ENCODE measurements at regions of chr22 and their contacts with region 1.

Region 1: DNA sequence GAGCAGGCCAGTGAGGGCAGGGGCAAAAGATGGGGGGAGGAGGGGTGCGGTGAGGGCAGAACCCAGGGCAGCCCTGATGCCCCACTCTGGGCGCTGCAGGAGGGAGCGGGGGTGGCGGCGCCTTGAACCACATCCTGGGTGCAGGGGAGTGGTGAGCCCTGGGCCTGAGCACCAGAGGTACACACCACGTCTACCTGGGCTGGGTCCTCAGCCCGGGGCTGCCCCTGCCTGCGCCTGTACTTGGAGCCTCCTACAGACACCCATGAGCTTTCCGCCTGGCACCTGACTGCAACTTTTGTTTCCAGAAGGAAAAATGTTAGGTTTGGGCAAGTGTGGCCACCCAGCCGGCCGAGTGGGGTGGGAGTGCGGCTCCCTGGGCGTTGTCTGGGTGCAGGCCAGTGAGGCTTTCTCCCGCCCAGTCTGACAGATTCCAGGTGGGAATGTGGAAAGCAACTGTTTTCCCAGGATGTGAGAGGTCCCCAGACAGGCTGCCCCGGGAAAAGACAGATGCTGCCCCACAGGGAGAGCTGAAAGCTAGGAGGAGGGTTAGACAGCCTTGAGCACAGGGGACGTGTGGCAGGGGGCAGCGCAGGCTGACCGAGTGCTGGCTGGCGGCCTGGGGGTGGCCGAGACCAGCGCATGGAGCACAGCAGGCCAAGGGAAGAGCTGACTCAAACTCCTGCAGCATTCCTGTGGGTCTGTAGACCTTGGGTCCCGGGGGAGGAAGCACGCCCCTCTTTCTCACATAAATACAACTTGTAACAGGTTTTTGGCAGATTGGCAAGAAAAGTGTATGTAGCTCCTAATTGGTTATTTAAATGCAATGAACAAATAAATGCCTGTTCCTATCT is 44.1 kb downstream of the GNB1L start:
- DNase-seq: no peak

Region 2: DNA sequence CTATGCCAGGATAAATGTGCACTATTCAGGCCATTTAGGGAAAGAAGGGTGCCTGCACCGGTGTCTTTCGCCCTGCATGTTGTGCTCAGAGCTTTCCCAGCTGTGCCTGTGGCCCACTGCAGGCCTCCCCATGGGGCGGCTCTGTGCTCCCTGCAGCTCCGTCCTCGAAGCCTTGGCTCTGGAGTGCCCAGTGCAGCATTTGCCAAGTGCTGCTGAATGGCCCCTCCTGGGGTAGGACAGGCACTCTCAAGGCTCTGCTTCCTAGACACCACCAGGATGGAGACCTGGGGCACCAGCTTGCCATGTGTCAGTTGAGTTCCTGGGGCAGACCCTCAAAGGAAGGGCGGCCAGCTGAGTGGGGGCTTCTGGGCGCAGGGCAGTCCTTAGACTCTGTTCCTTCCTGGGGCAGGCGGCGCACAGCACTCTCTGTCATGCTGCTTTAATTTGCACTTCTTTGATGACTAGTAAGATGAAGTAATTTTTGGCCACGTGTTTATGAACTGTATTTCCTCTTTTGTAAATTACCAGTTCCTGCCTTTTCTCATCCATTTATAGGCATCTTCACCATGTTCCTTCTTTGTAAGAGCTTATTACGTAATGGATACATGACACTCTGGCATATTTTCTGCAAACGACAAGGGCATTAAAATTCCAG is 76.2 kb after region 1 on chr22:
- in situ Hi-C with region 1: loop called (anchors 10 kb)
- DNase-seq: peak; percentile 96

Region 3: DNA sequence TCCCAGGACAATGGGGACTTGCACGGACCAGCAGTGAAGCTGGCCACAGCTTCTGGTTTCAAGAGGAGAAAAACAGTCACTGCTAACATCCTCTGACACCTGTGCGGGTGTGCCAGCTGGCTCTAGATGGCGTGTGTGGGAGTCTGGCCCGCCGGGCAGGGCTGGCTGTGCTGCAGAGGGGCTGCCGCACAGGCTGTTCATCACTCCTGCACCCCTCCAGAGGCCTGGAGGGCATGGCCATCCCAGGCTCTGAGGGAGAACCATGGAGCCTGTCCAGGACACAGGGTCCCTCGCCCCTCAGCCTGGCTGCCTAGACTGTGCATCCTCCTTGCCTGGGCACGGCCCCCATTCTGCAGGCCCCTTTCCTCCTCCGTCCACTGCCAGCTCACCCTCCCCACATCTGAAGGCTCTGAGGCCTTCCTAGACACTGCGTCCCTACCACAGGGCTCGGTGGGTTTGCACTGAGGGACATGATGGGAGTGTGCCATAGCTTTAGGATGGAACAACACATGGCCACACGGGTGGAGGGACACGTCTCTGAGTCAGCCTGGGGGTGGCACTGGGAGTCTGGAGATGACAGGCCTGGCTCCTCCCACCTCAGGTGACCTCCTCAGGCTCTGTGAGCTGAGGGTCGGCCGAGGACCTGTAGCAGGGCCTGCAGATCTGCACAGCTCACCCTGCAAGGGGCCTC is 86.2 kb after region 1 on chr22:
- in situ Hi-C with region 1: no loop called
- DNase-seq: no peak